ENCODE measurements at regions of chr2 and their contacts with region 1.

Region 1: DNA sequence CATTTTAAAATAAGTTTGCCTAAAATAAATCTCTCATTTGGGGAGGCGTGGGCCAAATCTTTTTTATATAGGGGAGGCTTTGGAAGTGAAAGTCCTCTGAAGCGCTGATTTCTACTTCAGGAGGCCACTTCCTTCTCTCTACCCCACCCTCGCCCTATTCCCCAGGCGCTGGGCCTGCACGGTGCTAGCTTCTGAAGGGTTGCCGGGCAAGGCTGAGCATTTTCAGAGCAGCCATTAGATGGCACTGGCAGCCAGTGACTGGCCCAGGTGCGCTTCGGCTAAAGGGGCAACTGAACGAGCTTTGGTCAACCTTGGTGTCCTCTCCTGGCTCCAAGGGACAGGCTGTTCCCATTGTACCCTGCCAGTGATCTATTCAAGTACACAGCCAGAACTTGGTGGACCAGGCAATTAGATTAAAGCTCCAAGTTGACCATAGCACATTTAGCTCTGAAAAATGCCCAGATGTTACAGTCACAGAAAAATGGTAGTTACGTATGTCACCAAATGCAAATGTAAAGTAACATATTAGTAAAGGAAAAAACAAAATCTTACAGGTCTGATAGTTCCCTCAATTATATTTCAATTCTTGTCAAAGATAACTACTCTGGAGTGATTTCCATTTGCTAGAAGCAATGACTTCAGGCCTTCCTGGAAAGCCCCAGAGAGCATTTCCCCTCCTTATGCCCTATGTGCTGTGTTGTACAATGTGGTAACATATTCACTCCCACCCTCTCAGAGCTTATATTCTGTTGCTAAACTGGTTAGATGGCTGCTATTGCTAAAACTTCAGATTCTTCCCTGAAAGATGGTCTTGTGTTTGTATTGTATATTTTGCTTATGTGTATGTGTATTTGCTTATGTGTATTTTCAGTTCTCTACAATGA is 2.1 kb downstream of the POMC start:
- DNase-seq: peak in 1 of 2 experiments; percentile 45
- H3K4me3 ChIP-seq: no peak overlapping the region
- H3K27ac ChIP-seq: no peak overlapping the region
- H3K4me1 ChIP-seq: no peaks in the 10 kb centered on the region
- H3K27me3 ChIP-seq: peaks cover 63% of the 10 kb centered on the region
- CTCF ChIP-seq: peak; percentile 54; the same call in 1 of the 2 replicates

Region 2: DNA sequence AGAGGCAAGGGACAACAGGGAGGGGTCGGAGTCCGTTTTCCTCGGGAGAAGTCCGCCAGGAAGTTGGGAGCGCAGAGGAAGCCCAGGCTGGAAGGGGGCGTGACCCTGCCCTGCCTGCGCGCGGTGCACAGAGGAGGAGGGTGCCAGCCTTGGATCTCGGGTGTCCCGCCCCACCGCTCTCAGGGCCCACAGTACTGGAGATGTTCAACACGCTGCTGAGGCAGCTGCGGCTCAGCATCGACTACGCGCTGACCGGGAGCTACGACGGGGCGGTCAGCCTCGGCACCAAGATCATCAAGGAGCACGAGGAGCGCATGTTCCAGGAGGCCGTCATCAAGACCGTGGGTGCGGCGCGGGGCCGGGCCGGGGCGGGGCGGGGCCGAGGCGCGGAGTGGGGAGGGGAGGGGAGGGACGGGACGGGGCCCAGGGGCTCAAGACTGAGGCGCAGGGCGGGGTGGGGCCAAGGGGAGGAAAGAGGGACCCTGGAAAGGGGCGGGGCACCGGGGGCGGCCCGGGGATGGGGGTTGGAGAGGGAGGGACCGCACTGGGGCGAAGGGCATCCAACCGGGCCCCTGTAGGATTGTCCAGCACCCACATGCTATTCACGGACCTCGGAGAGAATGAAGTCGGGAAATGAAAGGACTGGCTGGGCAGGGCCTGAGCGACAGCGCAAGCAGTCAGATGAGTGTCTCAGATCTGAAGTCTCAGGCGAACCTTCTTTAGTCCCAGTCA is 34.5 kb before region 1 on chr2:
- CTCF ChIA-PET with region 1: interaction called, 10 read pairs
- POLR2A ChIA-PET with region 1: no interaction called
- intact Hi-C with region 1: no loop called
- DNase-seq: no peak
- H3K4me3 ChIP-seq: no peak overlapping the region
- H3K27ac ChIP-seq: no peak overlapping the region
- H3K4me1 ChIP-seq: no peaks in the 10 kb centered on the region
- H3K27me3 ChIP-seq: peaks cover 61% of the 10 kb centered on the region
- CTCF ChIP-seq: no peak

Region 3: DNA sequence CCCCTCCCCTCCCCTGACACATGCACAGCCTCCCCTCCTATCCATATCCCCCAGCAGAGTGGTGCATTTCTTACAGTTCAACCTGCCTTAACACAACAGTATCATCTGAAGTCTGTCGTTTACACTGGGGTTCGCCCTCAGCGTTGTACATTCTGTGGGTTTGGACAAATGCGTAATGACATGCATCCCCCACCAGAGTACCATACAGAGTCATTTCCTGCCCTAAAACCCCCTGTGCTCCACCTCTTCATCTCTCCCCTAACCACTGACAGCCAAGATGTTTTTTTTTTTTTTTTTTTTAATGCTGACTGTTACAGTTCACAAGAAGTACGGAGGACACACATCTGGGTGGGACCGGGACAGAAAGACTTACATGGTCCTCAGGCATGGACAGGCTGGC is 20.4 kb before region 1 on chr2:
- CTCF ChIA-PET with region 1: interaction called, 11 read pairs
- POLR2A ChIA-PET with region 1: no interaction called
- intact Hi-C with region 1: no loop called
- DNase-seq: no peak
- H3K4me3 ChIP-seq: no peak overlapping the region
- H3K27ac ChIP-seq: no peak overlapping the region
- H3K4me1 ChIP-seq: no peaks in the 10 kb centered on the region
- H3K27me3 ChIP-seq: peaks cover 60% of the 10 kb centered on the region
- CTCF ChIP-seq: no peak

Region 4: DNA sequence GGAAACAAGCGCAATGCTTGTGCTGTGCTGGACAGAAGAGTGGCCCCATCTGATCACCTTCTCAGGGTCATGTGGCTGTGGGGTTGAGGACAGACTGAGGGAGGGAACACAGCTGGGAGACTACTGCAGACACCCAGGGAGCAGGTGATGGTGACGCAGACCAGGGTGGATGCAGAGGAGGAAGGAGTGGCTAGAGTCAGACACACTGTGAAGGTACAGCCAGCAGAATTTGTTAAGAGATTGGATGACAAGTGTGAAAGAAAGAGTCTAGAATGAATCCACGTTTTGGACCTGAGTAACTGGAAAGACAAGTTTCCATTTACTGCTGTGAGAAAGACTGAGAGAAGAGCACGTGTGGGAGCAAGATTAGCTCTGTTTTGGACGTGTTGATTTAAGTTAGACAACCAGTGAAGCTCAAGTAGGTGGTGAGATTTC is 18.0 kb after region 1 on chr2:
- CTCF ChIA-PET with region 1: no interaction called
- POLR2A ChIA-PET with region 1: no interaction called
- intact Hi-C with region 1: no loop called
- DNase-seq: peak; percentile 25 to 61
- H3K4me3 ChIP-seq: no peak overlapping the region
- H3K27ac ChIP-seq: no peak overlapping the region
- H3K4me1 ChIP-seq: peaks cover 9% of the 10 kb centered on the region; the same call in 1 of the 2 replicates
- H3K27me3 ChIP-seq: peaks cover 16% of the 10 kb centered on the region
- CTCF ChIP-seq: no peak

Region 5: DNA sequence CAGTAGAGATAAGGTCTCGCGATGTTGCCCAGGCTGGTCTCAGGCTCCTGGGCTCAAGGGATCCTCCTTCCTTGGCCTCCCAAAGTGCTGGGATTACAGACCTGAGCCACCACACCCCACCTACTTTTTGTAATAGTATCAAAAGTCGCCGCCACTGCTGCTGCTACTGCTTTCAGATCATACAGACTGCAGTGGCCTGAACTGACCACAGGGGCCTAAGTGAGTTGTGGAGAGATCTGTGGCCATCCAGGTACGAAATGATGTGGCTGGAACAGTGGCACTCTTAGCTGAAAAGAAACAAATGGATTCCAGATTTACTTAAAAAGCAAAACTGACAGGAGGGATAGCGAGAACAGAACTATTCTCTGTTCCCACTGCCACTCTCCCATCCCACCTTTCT is 35.0 kb after region 1 on chr2:
- CTCF ChIA-PET with region 1: interaction called, 9 read pairs
- POLR2A ChIA-PET with region 1: no interaction called
- intact Hi-C with region 1: loop called (anchors 1 kb)
- DNase-seq: no peak
- H3K4me3 ChIP-seq: no peak overlapping the region
- H3K27ac ChIP-seq: no peak overlapping the region
- H3K4me1 ChIP-seq: no peaks in the 10 kb centered on the region
- H3K27me3 ChIP-seq: no peaks in the 10 kb centered on the region
- CTCF ChIP-seq: peak; percentile 46

Region 6: DNA sequence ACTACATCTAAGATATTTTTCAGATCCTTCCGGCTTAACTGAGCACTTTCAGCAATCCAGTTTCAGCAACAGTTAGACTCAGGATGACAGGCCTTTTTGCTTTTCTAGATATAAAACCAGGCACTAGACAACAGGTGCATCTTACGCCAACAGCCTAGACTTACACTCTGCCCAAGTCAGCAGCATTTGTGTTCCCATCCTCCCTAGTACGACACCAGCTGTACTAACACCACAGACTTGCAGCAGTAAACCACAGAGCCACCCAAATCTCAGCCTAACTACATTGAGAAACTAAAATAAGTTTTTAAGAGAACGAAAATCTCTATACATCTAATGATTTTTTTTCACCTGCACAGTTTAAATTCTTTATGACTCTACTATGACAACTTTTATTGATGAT is 265.4 kb after region 1 on chr2:
- CTCF ChIA-PET with region 1: no interaction called
- POLR2A ChIA-PET with region 1: no interaction called
- intact Hi-C with region 1: no loop called
- DNase-seq: no peak
- H3K4me3 ChIP-seq: no peak overlapping the region
- H3K27ac ChIP-seq: no peak overlapping the region
- H3K4me1 ChIP-seq: no peaks in the 10 kb centered on the region
- H3K27me3 ChIP-seq: no peaks in the 10 kb centered on the region
- CTCF ChIP-seq: no peak

Region 7: DNA sequence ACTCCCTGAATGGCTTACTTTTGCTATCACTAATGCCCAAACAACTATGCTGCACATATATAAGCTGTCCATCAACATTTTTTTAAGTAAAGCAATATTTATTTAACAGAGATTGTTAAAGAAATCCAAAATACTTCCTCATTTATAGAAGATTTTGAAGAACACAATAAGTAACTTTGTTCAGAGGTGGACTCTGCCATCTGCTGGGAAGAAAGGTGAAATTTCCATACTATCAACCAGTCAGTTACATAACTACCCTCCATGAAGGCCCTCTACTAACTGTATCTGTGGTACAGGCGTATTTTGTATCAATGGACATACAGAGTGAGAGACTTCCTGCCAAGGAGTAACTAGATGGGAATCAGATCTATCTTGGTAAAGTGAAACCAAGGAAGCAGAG is 401.2 kb after region 1 on chr2:
- CTCF ChIA-PET with region 1: no interaction called
- POLR2A ChIA-PET with region 1: no interaction called
- intact Hi-C with region 1: loop called (anchors 2 kb)
- DNase-seq: peak; percentile 9 to 74
- H3K4me3 ChIP-seq: no peak overlapping the region
- H3K27ac ChIP-seq: no peak overlapping the region
- H3K4me1 ChIP-seq: no peaks in the 10 kb centered on the region
- H3K27me3 ChIP-seq: no peaks in the 10 kb centered on the region
- CTCF ChIP-seq: peak; percentile 73

Region 8: GRCh38 chr2:25920326-25920725 is 754.1 kb after region 1 on chr2:
- CTCF ChIA-PET with region 1: no interaction called
- POLR2A ChIA-PET with region 1: no interaction called
- intact Hi-C with region 1: no loop called
- DNase-seq: no peak
- H3K4me3 ChIP-seq: no peak overlapping the region
- H3K27ac ChIP-seq: no peak overlapping the region
- H3K4me1 ChIP-seq: no peaks in the 10 kb centered on the region
- H3K27me3 ChIP-seq: no peaks in the 10 kb centered on the region
- CTCF ChIP-seq: no peak